CD8-positive, alpha-beta T cell (primary cell): ENCODE measurements at regions of chr7 and their contacts with region 1.

Region 1: GRCh38 chr7:73738612-73739374 is at the start of gene ABHD11:
- DNase-seq: peak; percentile 96 to 100 (median 99)
- ATAC-seq: peak; percentile 87
- H3K4me3 ChIP-seq: peak within 1 kb of the TSS; percentile 76 to 92
- H3K4me3 Mint-ChIP-seq: peak within 1 kb of the TSS; percentile 88
- H3K27ac ChIP-seq: peak within 1 kb of the TSS; percentile 74 to 81
- H3K27ac Mint-ChIP-seq: peak within 1 kb of the TSS; percentile 93
- H3K4me1 ChIP-seq: peaks cover 17% of the 10 kb centered on the region
- H3K4me1 Mint-ChIP-seq: peaks cover 13% of the 10 kb centered on the region
- H3K27me3 ChIP-seq: no peaks in the 10 kb centered on the region
- H3K27me3 Mint-ChIP-seq: no peaks in the 10 kb centered on the region
- CTCF ChIP-seq: no peak
- total RNA-seq, gene ABHD11: 12.2 to 12.3 TPM

Region 2: DNA sequence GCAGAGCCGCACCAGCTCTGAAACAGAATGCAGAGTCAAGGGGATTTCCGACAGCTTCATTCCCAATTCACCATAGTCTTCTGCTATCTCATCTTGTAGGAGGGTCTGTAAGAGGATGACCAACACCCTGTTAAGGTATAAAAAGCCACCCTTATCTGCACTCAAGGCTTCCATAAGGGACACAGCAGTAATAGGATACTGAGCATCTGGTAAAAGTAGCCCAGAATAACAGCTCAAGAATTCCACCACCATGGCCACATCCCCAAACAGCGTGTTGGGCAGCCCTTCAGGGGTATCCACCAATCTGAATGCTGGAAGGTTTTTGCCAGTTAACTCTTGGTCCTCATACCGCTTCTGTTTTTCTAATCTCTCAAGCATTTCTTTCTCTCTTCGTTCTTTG is 261.4 kb before region 1 on chr7:
- CTCF ChIA-PET with region 1: no interaction called
- POLR2A ChIA-PET with region 1: no interaction called
- intact Hi-C with region 1: no loop called
- DNase-seq: no peak
- ATAC-seq: no peak
- H3K4me3 ChIP-seq: no peak overlapping the region
- H3K4me3 Mint-ChIP-seq: no peak overlapping the region
- H3K27ac ChIP-seq: no peak overlapping the region
- H3K27ac Mint-ChIP-seq: no peak overlapping the region
- H3K4me1 ChIP-seq: no peaks in the 10 kb centered on the region
- H3K4me1 Mint-ChIP-seq: peaks cover 31% of the 10 kb centered on the region
- H3K27me3 ChIP-seq: no peaks in the 10 kb centered on the region
- H3K27me3 Mint-ChIP-seq: no peaks in the 10 kb centered on the region
- CTCF ChIP-seq: no peak

Region 3: DNA sequence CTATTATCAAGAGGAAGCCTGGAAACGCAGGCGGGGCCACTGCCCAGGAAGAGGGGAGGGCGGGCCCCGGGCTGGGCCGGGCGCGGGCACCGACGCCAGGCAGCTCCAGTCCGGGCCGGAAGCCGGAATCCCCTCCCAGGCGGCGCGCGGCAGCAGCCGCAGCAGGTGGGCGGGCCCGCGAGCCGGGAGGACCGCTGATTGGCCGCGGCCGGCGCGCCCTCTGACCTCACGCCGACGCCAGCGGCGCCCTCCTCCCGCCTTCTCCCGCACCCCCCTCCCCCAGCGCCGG is 181.7 kb before region 1 on chr7:
- CTCF ChIA-PET with region 1: no interaction called
- POLR2A ChIA-PET with region 1: no interaction called
- intact Hi-C with region 1: loop called in 1 of 2 experiments (anchors 1 kb)
- DNase-seq: peak; percentile 79 to 96 (median 90)
- ATAC-seq: peak; percentile 91
- H3K4me3 ChIP-seq: peak overlapping the region; percentile 83 to 84
- H3K4me3 Mint-ChIP-seq: peak overlapping the region; percentile 95
- H3K27ac ChIP-seq: peak overlapping the region; percentile 98 to 99
- H3K27ac Mint-ChIP-seq: peak overlapping the region; percentile 99
- H3K4me1 ChIP-seq: peaks cover 23% of the 10 kb centered on the region
- H3K4me1 Mint-ChIP-seq: peaks cover 36% of the 10 kb centered on the region
- H3K27me3 ChIP-seq: no peaks in the 10 kb centered on the region
- H3K27me3 Mint-ChIP-seq: no peaks in the 10 kb centered on the region
- CTCF ChIP-seq: no peak

Region 4: DNA sequence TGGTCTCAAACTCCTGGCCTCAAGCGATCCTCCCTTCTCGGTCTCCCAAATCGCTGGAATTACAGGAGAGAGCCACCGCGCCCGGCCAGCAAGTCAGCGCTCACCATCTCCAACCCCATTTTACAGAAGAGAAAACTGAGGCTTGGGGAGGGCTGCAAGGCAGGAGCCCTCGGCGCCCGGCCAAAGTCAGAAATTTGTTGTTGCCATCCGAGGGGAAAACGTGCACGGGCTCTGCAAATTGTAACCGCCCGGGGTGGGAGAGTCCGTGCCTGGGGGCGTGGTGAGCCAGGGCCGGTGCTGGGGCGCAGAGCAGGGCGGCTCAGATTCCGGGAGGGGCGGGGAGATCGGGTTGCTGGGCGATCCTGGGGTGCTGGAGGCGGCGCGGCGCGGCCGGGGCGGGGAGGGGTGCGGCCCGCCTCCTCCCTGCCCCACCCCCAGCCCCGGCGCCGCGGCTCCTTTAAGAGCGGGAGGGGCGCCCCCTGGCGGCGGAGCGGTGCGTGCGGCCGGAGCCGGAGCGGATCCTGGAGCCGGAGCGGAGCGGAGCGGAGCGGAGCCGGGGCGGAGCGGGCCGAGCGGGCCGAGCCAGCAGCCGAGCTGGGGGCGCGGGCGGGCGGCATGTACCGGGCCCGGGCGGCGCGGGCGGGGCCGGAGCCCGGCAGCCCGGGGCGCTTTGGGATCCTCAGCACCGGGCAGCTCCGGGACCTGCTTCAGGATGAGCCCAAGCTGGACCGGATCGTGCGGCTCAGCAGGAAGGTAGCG is 71.3 kb before region 1 on chr7 and contains the start of gene VPS37D:
- CTCF ChIA-PET with region 1: no interaction called
- POLR2A ChIA-PET with region 1: interaction called, 7 read pairs
- intact Hi-C with region 1: loop called (anchors 1 kb)
- DNase-seq: peak; percentile 84 to 98 (median 93)
- ATAC-seq: peak; percentile 92
- H3K4me3 ChIP-seq: peak within 1 kb of the TSS; percentile 37 to 42
- H3K4me3 Mint-ChIP-seq: peak within 1 kb of the TSS; percentile 83
- H3K27ac ChIP-seq: no peak within 1 kb of the TSS
- H3K27ac Mint-ChIP-seq: no peak within 1 kb of the TSS
- H3K4me1 ChIP-seq: peaks cover 11% of the 10 kb centered on the region
- H3K4me1 Mint-ChIP-seq: peaks cover 7% of the 10 kb centered on the region
- H3K27me3 ChIP-seq: peaks cover 0 to 17% of the 10 kb centered on the region in 2 experiments
- H3K27me3 Mint-ChIP-seq: peaks cover 24% of the 10 kb centered on the region
- CTCF ChIP-seq: peak; percentile 62
- total RNA-seq, gene VPS37D: 0.89 to 1.3 TPM

Region 5: GRCh38 chr7:73701357-73701995 is 37.3 kb before region 1 on chr7:
- CTCF ChIA-PET with region 1: no interaction called
- POLR2A ChIA-PET with region 1: no interaction called
- intact Hi-C with region 1: no loop called
- DNase-seq: peak in 4 of 9 experiments; percentile 29 to 53 (median 37)
- ATAC-seq: peak; percentile 43
- H3K4me3 ChIP-seq: no peak overlapping the region
- H3K4me3 Mint-ChIP-seq: no peak overlapping the region
- H3K27ac ChIP-seq: no peak overlapping the region
- H3K27ac Mint-ChIP-seq: no peak overlapping the region
- H3K4me1 ChIP-seq: peaks cover 4% of the 10 kb centered on the region
- H3K4me1 Mint-ChIP-seq: peaks cover 3% of the 10 kb centered on the region
- H3K27me3 ChIP-seq: no peaks in the 10 kb centered on the region
- H3K27me3 Mint-ChIP-seq: no peaks in the 10 kb centered on the region
- CTCF ChIP-seq: peak; percentile 41

Region 6: DNA sequence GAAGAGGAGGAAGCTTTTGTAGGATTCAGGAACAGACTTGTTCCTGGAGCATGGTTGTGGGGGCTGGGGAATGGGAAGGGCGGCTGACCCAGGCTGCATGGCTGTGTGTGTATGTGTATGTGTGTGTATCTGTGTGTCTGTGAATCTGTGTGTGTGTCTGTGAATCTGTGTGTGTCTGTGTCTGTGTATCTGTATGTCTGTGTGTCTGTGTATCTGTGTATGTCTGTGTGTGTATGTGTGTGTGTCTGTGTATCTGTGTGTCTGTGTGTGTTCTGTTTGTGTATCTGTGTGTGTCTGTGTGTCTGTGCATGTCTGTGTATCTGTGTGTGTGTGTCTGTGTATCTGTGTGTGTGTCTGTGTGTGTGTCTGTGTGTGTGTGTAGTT is 12.7 kb before region 1 on chr7:
- CTCF ChIA-PET with region 1: interaction called, 12 read pairs
- POLR2A ChIA-PET with region 1: interaction called, 4 read pairs
- intact Hi-C with region 1: no loop called
- DNase-seq: no peak
- ATAC-seq: peak; percentile 16
- H3K4me3 ChIP-seq: no peak overlapping the region
- H3K4me3 Mint-ChIP-seq: no peak overlapping the region
- H3K27ac ChIP-seq: no peak overlapping the region
- H3K27ac Mint-ChIP-seq: no peak overlapping the region
- H3K4me1 ChIP-seq: no peaks in the 10 kb centered on the region
- H3K4me1 Mint-ChIP-seq: no peaks in the 10 kb centered on the region
- H3K27me3 ChIP-seq: peaks cover 0 to 6% of the 10 kb centered on the region in 2 experiments
- H3K27me3 Mint-ChIP-seq: peaks cover 11% of the 10 kb centered on the region
- CTCF ChIP-seq: no peak

Region 7: GRCh38 chr7:74083117-74083876 is 344.5 kb after region 1 on chr7 and contains the start of gene LIMK1:
- CTCF ChIA-PET with region 1: no interaction called
- POLR2A ChIA-PET with region 1: no interaction called
- intact Hi-C with region 1: loop called in 1 of 2 experiments (anchors 5 kb)
- DNase-seq: peak; percentile 68 to 91 (median 81)
- ATAC-seq: peak; percentile 97
- H3K4me3 ChIP-seq: peak within 1 kb of the TSS; percentile 61
- H3K4me3 Mint-ChIP-seq: peak within 1 kb of the TSS; percentile 81
- H3K27ac ChIP-seq: peak within 1 kb of the TSS in 1 of 2 experiments; percentile 36
- H3K27ac Mint-ChIP-seq: no peak within 1 kb of the TSS
- H3K4me1 ChIP-seq: peaks cover 12% of the 10 kb centered on the region
- H3K4me1 Mint-ChIP-seq: peaks cover 9% of the 10 kb centered on the region
- H3K27me3 ChIP-seq: no peaks in the 10 kb centered on the region
- H3K27me3 Mint-ChIP-seq: no peaks in the 10 kb centered on the region
- CTCF ChIP-seq: no peak
- total RNA-seq, gene LIMK1: 12.8 to 13.7 TPM